ENCODE measurements at regions of chr15 and their contacts with region 1.

Region 1: GRCh38 chr15:64681424-64682024 is 93.9 kb downstream of the RBPMS2 start:
- DNase-seq: peak; percentile 53 to 54
- H3K4me3 ChIP-seq: no peak overlapping the region
- H3K27ac ChIP-seq: no peak overlapping the region
- H3K4me1 ChIP-seq: no peaks in the 10 kb centered on the region
- H3K27me3 ChIP-seq: no peaks in the 10 kb centered on the region
- CTCF ChIP-seq: peak; percentile 66

Region 2: DNA sequence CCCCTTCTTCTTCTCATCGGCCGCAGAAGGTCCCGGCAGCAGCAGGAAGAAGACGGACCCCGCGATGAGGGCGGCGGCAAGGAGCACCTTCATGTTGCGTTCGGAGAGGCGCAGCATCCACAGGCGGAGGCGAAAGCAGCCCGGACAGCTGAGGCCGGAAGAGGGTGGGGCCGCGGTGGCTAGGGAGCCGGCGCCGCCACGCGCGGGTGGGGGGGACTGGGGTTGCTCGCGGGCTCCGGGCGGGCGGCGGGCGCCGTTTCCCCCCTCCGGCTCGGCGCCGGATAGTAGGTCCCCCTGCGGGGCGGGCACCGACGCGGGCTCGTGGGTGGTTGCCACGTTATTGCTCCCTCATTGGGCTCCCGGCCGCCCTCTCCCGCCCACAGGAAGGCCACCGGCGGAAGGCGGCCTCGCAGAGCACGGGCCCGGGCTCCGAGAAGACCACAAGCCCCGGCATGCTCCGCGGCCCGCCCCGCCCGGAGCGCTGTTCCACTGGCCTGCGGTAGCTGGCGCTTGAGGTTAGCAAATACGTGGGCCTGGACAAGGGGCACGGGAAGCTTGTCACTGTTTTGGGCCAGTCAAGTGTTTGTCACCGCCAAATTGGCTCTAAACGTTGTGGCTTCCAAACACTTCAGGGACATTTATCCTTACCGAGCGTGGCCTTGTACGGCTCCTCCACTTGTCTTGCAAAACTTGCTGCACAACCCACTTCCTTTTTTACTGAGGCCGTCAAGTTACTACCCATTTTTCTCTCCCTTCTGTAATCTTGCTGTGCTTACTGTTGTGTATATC is 518.5 kb before region 1 on chr15 and contains the start of gene PPIB:
- CTCF ChIA-PET with region 1: no interaction called
- POLR2A ChIA-PET with region 1: interaction called, 3 read pairs
- intact Hi-C with region 1: loop called (anchors 5 kb)
- DNase-seq: peak; percentile 85 to 97
- H3K4me3 ChIP-seq: peak within 1 kb of the TSS; percentile 95
- H3K27ac ChIP-seq: peak within 1 kb of the TSS; percentile 51
- H3K4me1 ChIP-seq: no peaks in the 10 kb centered on the region; the same call in none of the 2 replicates
- H3K27me3 ChIP-seq: no peaks in the 10 kb centered on the region
- CTCF ChIP-seq: no peak; the same call in 1 of the 2 replicates
- total RNA-seq, gene PPIB: 308 and 345 TPM in 2 replicates

Region 3: GRCh38 chr15:64209680-64210334 is 471.7 kb before region 1 on chr15:
- CTCF ChIA-PET with region 1: no interaction called
- POLR2A ChIA-PET with region 1: no interaction called
- intact Hi-C with region 1: loop called (anchors 1 kb)
- DNase-seq: peak in 1 of 2 experiments; percentile 61
- H3K4me3 ChIP-seq: no peak overlapping the region
- H3K27ac ChIP-seq: 0 out of 2 replicates have a peak overlapping the region, but pooled peaks have one; percentile 9
- H3K4me1 ChIP-seq: no peaks in the 10 kb centered on the region
- H3K27me3 ChIP-seq: no peaks in the 10 kb centered on the region
- CTCF ChIP-seq: peak; percentile 73

Region 4: GRCh38 chr15:64430000-64430735 is 251.4 kb before region 1 on chr15:
- CTCF ChIA-PET with region 1: interaction called, 4 read pairs
- POLR2A ChIA-PET with region 1: no interaction called
- intact Hi-C with region 1: loop called (anchors 1 kb)
- DNase-seq: no peak
- H3K4me3 ChIP-seq: no peak overlapping the region
- H3K27ac ChIP-seq: no peak overlapping the region
- H3K4me1 ChIP-seq: no peaks in the 10 kb centered on the region
- H3K27me3 ChIP-seq: no peaks in the 10 kb centered on the region
- CTCF ChIP-seq: no peak

Region 5: GRCh38 chr15:64507293-64507802 is 174.2 kb before region 1 on chr15:
- CTCF ChIA-PET with region 1: no interaction called
- POLR2A ChIA-PET with region 1: no interaction called
- intact Hi-C with region 1: loop called (anchors 2 kb)
- DNase-seq: peak; percentile 21 to 53
- H3K4me3 ChIP-seq: no peak overlapping the region
- H3K27ac ChIP-seq: no peak overlapping the region
- H3K4me1 ChIP-seq: no peaks in the 10 kb centered on the region
- H3K27me3 ChIP-seq: no peaks in the 10 kb centered on the region
- CTCF ChIP-seq: no peak

Region 6: GRCh38 chr15:64809649-64810496 is 128.3 kb after region 1 on chr15:
- CTCF ChIA-PET with region 1: no interaction called
- POLR2A ChIA-PET with region 1: no interaction called
- intact Hi-C with region 1: loop called (anchors 2 kb)
- DNase-seq: peak in 1 of 2 experiments; percentile 69
- H3K4me3 ChIP-seq: no peak overlapping the region
- H3K27ac ChIP-seq: no peak overlapping the region
- H3K4me1 ChIP-seq: no peaks in the 10 kb centered on the region
- H3K27me3 ChIP-seq: no peaks in the 10 kb centered on the region
- CTCF ChIP-seq: peak; percentile 93

Measured in PC-9 (cell line).